T-cell (primary cell): ENCODE measurements at regions of chr2 and their contacts with region 1.

Region 1: GRCh38 chr2:102664471-102664909 is 45.1 kb downstream of the SLC9A2 start:
- DNase-seq: peak in 2 of 35 experiments; percentile 5 to 11
- ATAC-seq: peak in 3 of 4 experiments; percentile 65 to 70 (median 67)
- H3K4me3 ChIP-seq: no peak overlapping the region
- H3K4me3 Mint-ChIP-seq: no peak overlapping the region
- H3K27ac ChIP-seq: no peak overlapping the region
- H3K27ac Mint-ChIP-seq: no peak overlapping the region
- H3K4me1 ChIP-seq: peaks cover 3 to 8% of the 10 kb centered on the region in 2 experiments
- H3K4me1 Mint-ChIP-seq: peaks cover 13 to 24% (median 13%) of the 10 kb centered on the region in 3 donors
- H3K27me3 ChIP-seq: peaks cover 0 to 4% of the 10 kb centered on the region in 2 experiments
- H3K27me3 Mint-ChIP-seq: peaks cover 0 to 3% of the 10 kb centered on the region in 2 donors

Region 2: GRCh38 chr2:101806123-101806522 is 858.4 kb before region 1 on chr2:
- CTCF ChIA-PET with region 1: no interaction called
- POLR2A ChIA-PET with region 1: no interaction called
- DNase-seq: peak in 6 of 35 experiments; percentile 8 to 37 (median 24)
- ATAC-seq: peak; percentile 48 to 84 (median 64)
- H3K4me3 ChIP-seq: no peak overlapping the region
- H3K4me3 Mint-ChIP-seq: peak overlapping the region in 1 of 3 donors; percentile 25
- H3K27ac ChIP-seq: no peak overlapping the region
- H3K27ac Mint-ChIP-seq: peak overlapping the region; percentile 66 to 75
- H3K4me1 ChIP-seq: peaks cover 19 to 30% of the 10 kb centered on the region in 2 experiments
- H3K4me1 Mint-ChIP-seq: peaks cover 69 to 84% (median 77%) of the 10 kb centered on the region in 3 donors
- H3K27me3 ChIP-seq: no peaks in the 10 kb centered on the region
- H3K27me3 Mint-ChIP-seq: no peaks in the 10 kb centered on the region

Region 3: DNA sequence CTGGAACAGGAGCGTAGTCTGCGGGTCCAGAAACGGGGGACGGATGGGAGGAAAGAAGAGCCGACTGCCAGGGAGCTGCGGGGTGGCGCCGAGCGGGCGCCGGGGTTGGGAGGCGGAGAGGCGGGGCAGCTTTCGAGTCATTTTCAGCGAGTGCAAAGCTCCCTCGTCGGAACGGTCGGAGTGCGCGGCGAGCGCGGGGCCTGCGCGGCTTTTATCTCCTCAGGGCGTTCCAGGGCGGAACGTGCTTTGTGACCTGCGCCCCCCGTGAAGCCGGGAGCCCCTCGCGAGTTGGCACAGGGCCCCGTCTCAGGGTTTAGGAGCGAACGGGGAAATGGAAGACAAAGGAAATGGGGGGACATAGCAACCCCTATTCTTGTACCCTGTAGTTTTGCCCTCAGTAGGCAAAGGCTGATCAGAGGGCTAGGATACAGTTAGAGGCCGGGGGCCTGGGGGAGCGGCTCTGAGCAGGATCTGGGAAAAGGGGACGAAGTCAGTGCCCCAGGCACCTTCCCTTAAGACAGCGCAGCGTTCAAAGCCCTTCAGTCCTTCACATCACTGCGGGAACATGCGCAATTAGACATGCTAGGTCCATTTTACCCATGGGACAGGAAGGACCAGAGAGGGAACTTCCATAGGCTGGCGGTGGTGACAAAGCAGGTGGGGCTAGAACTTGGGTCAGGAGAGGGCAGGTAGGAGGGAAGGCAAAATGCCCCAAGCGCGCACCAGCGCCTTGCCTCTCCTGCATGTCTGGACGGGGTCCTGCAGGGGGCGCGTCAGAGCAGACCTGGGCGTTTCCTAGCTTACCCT is 413.2 kb before region 1 on chr2:
- CTCF ChIA-PET with region 1: interaction called in 1 of 2 experiments, 15 read pairs
- POLR2A ChIA-PET with region 1: no interaction called
- DNase-seq: peak; percentile 27 to 78 (median 55)
- ATAC-seq: peak; percentile 80 to 85 (median 84)
- H3K4me3 ChIP-seq: peak overlapping the region; percentile 54 to 89
- H3K4me3 Mint-ChIP-seq: peak overlapping the region; percentile 82 to 96 (median 83)
- H3K27ac ChIP-seq: no peak overlapping the region
- H3K27ac Mint-ChIP-seq: peak overlapping the region in 1 of 2 donors; percentile 64
- H3K4me1 ChIP-seq: peaks cover 4 to 21% of the 10 kb centered on the region in 2 experiments
- H3K4me1 Mint-ChIP-seq: peaks cover 17 to 35% (median 26%) of the 10 kb centered on the region in 3 donors
- H3K27me3 ChIP-seq: peaks cover 0 to 10% of the 10 kb centered on the region in 2 experiments
- H3K27me3 Mint-ChIP-seq: peaks cover 0 to 3% of the 10 kb centered on the region in 2 donors

Region 4: DNA sequence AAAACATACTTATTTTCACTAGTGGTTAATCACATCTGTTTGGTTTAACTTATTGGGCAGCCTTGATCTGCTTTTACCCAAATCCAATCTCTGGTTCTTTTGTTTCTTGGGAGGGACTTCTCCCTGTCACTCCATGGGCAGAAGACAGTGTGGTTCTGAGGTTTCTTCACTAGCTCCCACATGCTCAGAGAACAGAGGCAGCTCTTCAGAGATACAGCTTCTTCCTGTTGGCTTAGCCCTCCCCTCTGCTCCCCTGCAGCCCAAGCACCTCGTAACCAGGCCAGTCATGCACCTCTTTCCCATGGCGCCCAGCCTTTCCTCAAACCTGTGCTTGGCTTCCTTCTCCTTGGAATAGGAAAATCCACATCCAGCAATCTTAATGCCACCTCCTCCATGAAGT is 12.4 kb before region 1 on chr2:
- CTCF ChIA-PET with region 1: no interaction called
- POLR2A ChIA-PET with region 1: no interaction called
- DNase-seq: no peak
- ATAC-seq: no peak
- H3K4me3 ChIP-seq: no peak overlapping the region
- H3K4me3 Mint-ChIP-seq: no peak overlapping the region
- H3K27ac ChIP-seq: no peak overlapping the region
- H3K27ac Mint-ChIP-seq: no peak overlapping the region
- H3K4me1 ChIP-seq: peaks cover 0 to 2% of the 10 kb centered on the region in 2 experiments
- H3K4me1 Mint-ChIP-seq: peaks cover 0 to 10% (median 3%) of the 10 kb centered on the region in 3 donors
- H3K27me3 ChIP-seq: peaks cover 0 to 3% of the 10 kb centered on the region in 2 experiments
- H3K27me3 Mint-ChIP-seq: peaks cover 7 to 15% of the 10 kb centered on the region in 2 donors